Caco-2 (cell line): ENCODE measurements at regions of chr7 and their contacts with region 1.

Region 1: DNA sequence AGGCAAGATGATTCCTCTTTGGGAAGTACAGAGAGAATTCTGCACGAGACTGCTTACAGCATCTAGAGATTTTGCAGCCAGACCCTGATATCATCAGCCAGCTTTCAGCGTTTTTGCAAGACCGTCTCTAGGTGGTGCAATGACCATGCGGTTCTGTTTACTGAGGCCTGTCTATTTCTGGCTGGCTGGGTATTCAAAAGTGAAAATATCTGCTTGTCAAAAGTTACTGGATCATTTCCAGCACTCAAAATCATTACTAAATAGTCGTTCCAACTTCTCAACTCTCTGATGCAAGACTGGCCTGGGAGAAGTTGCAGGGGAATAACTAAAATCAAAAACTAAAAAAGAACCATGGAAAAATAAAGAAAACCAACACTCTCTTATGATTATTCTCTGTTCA is 240.1 kb downstream of the ELMO1 start:
- DNase-seq: peak; percentile 48 to 59
- H3K4me3 ChIP-seq: no peak overlapping the region
- H3K4me3 Mint-ChIP-seq: no peak overlapping the region
- H3K27ac Mint-ChIP-seq: no peak overlapping the region
- H3K4me1 ChIP-seq: no peaks in the 10 kb centered on the region
- H3K4me1 Mint-ChIP-seq: no peaks in the 10 kb centered on the region
- H3K27me3 ChIP-seq: no peaks in the 10 kb centered on the region
- H3K27me3 Mint-ChIP-seq: peaks cover 4% of the 10 kb centered on the region
- CTCF ChIP-seq: peak; percentile 29 to 69

Region 2: DNA sequence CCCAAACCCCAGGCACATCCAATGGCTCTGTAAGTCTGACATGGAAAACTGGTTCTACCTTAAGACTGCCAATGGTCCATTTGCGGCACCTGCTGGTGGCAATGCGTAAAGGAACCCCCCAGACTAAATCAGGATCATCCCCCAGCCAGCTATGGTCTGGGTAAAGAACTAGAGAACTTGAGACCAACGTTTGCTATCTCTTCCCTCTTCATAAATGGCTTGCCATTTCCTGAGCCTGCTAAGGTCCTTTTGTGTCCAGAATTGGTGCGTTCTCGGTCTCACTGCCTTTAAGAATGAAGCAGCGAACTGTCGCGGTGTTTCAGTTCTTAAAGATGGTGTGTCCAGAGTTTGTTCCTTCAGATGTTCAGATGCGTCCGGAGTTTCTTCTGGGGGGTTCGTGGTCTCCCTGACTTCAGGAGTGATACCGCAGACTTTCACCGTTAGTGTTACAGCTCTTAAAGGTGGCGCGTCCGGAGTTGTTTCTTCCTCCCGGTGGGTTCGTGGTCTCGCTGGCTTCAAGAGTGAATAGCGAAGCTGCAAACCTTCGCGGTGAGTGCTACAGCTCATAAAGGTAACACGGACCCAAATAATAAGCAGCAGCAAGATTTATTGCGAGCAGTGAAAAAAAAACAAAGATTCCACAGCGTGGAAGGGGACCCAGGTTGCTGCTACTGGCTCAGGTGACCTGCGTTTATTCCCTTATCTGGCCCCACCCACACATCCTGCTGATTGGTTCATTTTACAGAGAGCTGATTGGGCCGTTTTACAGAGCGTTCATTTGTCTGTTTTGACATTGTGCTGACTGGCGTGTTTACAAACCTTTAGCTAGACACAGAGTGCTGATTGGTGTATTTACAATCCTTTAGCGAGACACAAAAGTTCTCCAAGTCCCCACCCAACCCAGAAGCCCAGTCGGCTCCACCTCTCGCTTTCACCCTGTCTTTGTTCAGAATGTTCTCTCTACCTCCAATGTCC is 144.7 kb after region 1 on chr7:
- CTCF ChIA-PET with region 1: no interaction called
- POLR2A ChIA-PET with region 1: no interaction called
- intact Hi-C with region 1: loop called (anchors 1 kb)
- DNase-seq: peak; percentile 42 to 45
- H3K4me3 ChIP-seq: no peak overlapping the region
- H3K4me3 Mint-ChIP-seq: no peak overlapping the region
- H3K27ac Mint-ChIP-seq: no peak overlapping the region
- H3K4me1 ChIP-seq: no peaks in the 10 kb centered on the region
- H3K4me1 Mint-ChIP-seq: no peaks in the 10 kb centered on the region
- H3K27me3 ChIP-seq: no peaks in the 10 kb centered on the region
- H3K27me3 Mint-ChIP-seq: peaks cover 4% of the 10 kb centered on the region
- CTCF ChIP-seq: peak; percentile 51 to 55

Region 3: GRCh38 chr7:37495574-37496184 is 287.2 kb after region 1 on chr7:
- CTCF ChIA-PET with region 1: no interaction called
- POLR2A ChIA-PET with region 1: no interaction called
- intact Hi-C with region 1: loop called (anchors 1 kb)
- DNase-seq: peak in 1 of 2 experiments; percentile 13
- H3K4me3 ChIP-seq: no peak overlapping the region
- H3K4me3 Mint-ChIP-seq: no peak overlapping the region
- H3K27ac Mint-ChIP-seq: no peak overlapping the region
- H3K4me1 ChIP-seq: no peaks in the 10 kb centered on the region
- H3K4me1 Mint-ChIP-seq: no peaks in the 10 kb centered on the region
- H3K27me3 ChIP-seq: no peaks in the 10 kb centered on the region
- H3K27me3 Mint-ChIP-seq: peaks cover 3% of the 10 kb centered on the region
- CTCF ChIP-seq: peak in 1 of 2 experiments; percentile 69

Region 4: GRCh38 chr7:37510043-37510634 is 301.6 kb after region 1 on chr7:
- CTCF ChIA-PET with region 1: no interaction called
- POLR2A ChIA-PET with region 1: no interaction called
- intact Hi-C with region 1: loop called (anchors 1 kb)
- DNase-seq: peak in 1 of 2 experiments; percentile 15
- H3K4me3 ChIP-seq: no peak overlapping the region
- H3K4me3 Mint-ChIP-seq: no peak overlapping the region
- H3K27ac Mint-ChIP-seq: no peak overlapping the region
- H3K4me1 ChIP-seq: no peaks in the 10 kb centered on the region
- H3K4me1 Mint-ChIP-seq: no peaks in the 10 kb centered on the region
- H3K27me3 ChIP-seq: no peaks in the 10 kb centered on the region
- H3K27me3 Mint-ChIP-seq: peaks cover 6% of the 10 kb centered on the region
- CTCF ChIP-seq: peak; percentile 45 to 72

Region 5: DNA sequence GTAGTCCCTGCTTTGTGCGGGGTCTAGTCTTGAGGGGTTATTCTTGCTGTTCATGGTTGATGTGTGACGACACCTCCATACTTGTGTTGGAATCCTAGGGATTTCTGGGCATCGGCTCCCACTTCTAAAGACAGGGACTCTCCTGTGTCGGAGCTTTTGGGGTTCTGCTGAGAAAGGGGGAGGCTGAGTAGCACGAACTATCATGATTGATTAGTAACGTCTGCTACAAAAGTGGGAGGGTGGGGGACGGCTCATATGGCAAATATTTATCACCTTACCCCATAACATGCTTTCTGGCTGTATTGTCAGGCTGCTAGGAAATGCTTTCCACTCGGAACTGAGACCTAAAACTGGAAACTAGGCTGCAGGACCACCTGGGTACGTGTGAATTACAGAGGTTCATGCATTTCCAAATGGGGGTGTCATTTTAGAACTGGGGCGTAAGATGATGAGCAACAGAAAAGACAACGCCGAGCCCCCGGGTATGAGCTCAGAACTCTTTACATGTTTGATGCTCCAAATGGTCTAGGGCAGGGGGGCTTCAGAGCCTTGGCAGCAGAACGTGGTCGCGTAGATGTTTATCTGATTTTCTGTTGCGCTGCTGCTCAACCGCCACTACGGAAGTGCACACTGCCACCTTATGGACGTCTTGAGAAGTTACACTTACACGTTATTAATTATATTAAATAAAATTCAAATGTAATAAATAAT is 624.7 kb after region 1 on chr7:
- CTCF ChIA-PET with region 1: no interaction called
- POLR2A ChIA-PET with region 1: no interaction called
- intact Hi-C with region 1: loop called (anchors 2 kb)
- DNase-seq: peak; percentile 32 to 41
- H3K4me3 ChIP-seq: no peak overlapping the region
- H3K4me3 Mint-ChIP-seq: no peak overlapping the region
- H3K27ac Mint-ChIP-seq: no peak overlapping the region
- H3K4me1 ChIP-seq: no peaks in the 10 kb centered on the region
- H3K4me1 Mint-ChIP-seq: no peaks in the 10 kb centered on the region
- H3K27me3 ChIP-seq: no peaks in the 10 kb centered on the region
- H3K27me3 Mint-ChIP-seq: peaks cover 3% of the 10 kb centered on the region
- CTCF ChIP-seq: peak; percentile 53 to 68